Dorsolateral prefrontal cortex (tissue), 120 donors: ENCODE measurements at regions of chr5 and their contacts with region 1.

Region 1: DNA sequence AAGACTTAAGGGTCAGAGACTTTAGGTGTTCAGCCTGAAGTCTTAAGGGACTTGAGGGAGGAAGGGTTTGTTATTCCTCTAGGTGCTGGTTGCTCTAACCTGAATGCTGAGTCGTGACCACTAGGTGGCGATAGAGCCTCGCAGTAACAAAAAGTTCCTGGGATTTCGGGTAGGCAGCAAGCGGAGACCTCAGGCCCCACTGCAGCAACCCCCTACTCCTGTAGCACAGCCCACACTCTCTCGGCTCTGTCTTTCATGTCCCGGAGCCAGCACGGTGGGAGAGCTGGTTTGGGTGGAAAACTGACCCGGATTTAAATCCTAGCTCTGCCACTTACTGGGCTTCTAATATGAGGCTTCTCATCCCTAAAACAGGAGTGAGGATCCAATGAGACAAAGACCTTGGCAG is 100.3 kb upstream of the PANK3 start:
- DNase-seq: peak in 9 of 10 donors; percentile 47 to 88 (median 79)
- H3K4me3 ChIP-seq: no peak overlapping the region
- H3K27ac ChIP-seq: peak overlapping the region in 1 of 59 donors; percentile 68
- H3K27me3 ChIP-seq: no peaks in the 10 kb centered on the region
- CTCF ChIP-seq: peak; percentile 74 to 96 (median 90)

Region 2: DNA sequence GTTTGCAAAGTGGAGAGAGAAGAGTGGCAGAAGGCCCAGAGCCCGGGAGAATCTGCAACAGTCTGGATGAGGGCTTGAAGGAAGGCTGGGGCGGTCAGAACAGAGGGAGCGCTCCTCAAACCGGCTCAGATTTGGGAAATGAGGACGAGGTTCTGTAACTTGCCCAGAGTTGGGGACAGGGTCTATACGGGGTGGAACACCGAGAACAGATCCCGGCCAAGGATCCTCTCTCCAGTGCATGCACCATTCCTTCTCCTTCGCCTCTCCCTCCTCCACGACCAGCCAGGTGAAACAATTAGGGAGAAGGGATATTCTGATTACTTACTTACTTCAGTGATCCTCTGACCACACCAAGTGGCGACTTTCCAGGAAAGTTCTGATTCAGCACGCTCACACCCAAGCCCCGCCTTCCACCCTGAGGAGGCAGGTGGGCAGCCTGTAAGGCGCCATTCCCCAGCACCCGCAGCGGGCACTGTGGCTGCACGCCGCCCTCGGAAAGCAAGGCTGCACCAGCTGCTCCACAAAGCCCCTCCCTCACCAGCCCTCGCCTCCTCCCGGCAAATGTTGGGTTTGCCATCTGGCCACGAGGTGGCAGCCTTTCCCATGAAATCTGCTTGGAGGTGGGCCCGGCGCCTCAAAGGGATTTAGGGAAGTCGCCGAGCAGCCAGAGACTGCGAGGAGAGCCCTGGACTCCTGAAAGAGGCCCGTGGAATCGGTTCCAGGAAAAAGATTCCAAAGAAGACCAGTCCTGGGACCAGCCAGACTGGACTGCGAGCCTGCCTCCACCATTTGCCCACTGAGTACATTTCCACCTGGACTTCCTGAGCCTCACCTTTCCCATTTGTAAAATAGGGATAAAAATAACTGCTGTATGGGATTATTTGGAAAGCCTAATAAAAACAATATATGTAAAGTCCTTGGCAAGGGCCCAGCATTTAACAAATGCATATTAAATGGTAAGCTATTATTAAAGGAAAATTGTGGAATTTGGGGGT is 410.3 kb before region 1 on chr5:
- intact Hi-C with region 1: loop called in 1 of 2 experiments (anchors 10 kb)
- DNase-seq: peak; percentile 67 to 93 (median 84)
- H3K4me3 ChIP-seq: peak overlapping the region; percentile 13 to 69 (median 46)
- H3K27ac ChIP-seq: peak overlapping the region in 13 of 59 donors; percentile 13 to 75 (median 42)
- H3K27me3 ChIP-seq: no peaks in the 10 kb centered on the region
- CTCF ChIP-seq: peak; percentile 71 to 96 (median 90)

Region 3: GRCh38 chr5:168612996-168613395 is 66.5 kb before region 1 on chr5:
- intact Hi-C with region 1: no loop called
- DNase-seq: no peak
- H3K4me3 ChIP-seq: no peak overlapping the region
- H3K27ac ChIP-seq: no peak overlapping the region
- H3K27me3 ChIP-seq: no peaks in the 10 kb centered on the region
- CTCF ChIP-seq: no peak

Region 4: DNA sequence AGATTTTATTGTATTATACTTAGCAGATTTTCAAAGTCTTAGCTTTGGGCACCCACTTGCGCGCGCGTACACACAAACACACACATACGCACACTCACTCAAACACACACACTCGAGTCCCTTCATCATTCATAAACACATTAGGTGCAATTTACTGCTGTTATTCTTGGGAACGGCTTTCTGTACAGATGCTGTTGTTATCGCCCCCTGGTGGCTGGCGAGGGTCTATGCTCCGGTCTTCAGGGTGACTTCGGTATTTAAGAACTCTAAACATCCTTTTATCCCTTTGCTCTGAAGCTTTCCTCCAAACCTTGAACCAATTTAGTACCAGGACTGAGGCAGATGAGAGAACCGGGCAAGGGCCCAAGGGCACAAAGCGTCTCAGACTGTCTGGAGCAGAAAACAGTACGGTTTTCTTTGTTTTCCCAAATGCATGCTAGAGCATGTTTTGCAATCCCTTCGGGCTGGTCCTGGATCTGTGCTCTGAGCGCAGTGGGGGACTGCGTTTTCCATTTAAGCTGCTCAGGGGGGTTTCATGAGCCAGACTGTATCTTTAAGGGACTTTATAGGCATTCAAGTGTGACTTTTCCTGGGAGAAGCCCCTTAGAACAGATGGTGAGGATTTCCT is 623.1 kb after region 1 on chr5:
- intact Hi-C with region 1: loop called (anchors 10 kb)
- DNase-seq: peak; percentile 62 to 88 (median 78)
- H3K4me3 ChIP-seq: peak overlapping the region in 13 of 59 donors; percentile 2 to 67 (median 17)
- H3K27ac ChIP-seq: no peak overlapping the region
- H3K27me3 ChIP-seq: peaks cover 0 to 68% (median 34%) of the 10 kb centered on the region in 45 donors
- CTCF ChIP-seq: peak; percentile 68 to 97 (median 92)

Region 5: DNA sequence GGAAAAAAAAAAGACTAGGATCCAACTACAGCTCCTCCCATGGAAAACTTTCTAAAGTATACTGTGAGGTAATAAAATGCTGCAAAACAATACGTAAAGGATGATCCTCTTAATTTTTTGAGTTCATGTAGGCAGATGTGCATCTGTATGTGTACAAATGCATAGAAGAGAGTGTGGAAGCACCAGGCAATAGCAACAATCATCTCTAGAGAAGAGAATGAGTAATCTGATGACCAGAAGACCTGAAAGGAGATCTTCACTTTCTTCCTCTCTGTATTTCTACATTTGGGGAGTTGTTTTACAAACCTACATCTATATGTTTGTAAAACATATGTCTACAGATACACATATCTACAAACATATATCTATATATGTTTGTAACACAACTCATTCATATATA is 874.7 kb after region 1 on chr5:
- intact Hi-C with region 1: loop called in 1 of 2 experiments (anchors 10 kb)
- DNase-seq: no peak
- H3K4me3 ChIP-seq: no peak overlapping the region
- H3K27ac ChIP-seq: no peak overlapping the region
- H3K27me3 ChIP-seq: peaks cover 0 to 22% (median 0%) of the 10 kb centered on the region in 45 donors
- CTCF ChIP-seq: no peak

Region 6: DNA sequence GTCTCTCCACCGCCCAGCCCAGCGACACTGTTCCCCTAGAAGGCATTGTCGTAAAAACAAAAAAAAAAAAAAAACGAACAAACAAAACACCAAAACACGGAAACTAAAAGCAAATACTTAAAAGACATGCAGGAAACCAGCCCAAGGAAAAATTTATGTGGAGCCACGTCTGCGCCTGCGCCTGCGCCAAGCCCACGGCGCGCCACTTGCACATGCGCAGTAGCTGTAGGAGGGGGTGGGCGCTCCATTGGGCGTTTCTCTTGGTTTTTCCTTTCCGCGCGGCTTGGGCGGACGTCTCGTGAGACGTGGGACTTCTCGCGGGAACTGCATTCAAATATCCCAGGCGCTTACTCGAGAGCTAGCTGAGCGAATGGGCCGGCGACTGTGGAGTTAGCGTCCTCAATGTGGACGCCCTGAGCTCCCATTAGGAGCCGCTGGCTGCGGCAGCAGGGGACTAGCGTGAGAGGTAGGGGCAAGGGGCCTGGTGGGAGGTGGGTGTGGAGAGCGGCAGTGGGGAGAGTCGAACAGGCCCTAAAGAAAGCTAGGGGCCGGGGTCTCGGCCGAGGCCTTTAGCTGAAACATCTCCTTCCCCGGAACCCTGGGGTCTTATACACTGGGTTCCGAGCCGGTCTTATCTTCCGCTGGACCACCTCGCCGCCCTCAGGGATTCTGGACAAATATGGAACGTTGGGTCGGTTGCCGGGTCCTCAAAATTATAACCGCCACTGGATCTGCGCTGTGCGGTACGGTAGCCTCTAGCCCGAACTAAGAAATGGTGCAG is 904.1 kb after region 1 on chr5 and contains the start of gene SPDL1:
- intact Hi-C with region 1: loop called in 1 of 2 experiments (anchors 2 kb)
- DNase-seq: peak; percentile 85 to 97 (median 93)
- H3K4me3 ChIP-seq: peak within 1 kb of the TSS; percentile 58 to 97 (median 87)
- H3K27ac ChIP-seq: peak within 1 kb of the TSS in 52 of 59 donors; percentile 2 to 89 (median 70)
- H3K27me3 ChIP-seq: no peaks in the 10 kb centered on the region
- CTCF ChIP-seq: peak in 41 of 56 donors; percentile 7 to 68 (median 36)
- total RNA-seq, gene SPDL1: 6.4 to 23.1 (median 14.0) TPM